Left ventricle myocardium superior (tissue), 1 donor: ENCODE measurements at regions of chr6 and their contacts with region 1.

Region 1: GRCh38 chr6:28863604-28864320 is 60.0 kb downstream of the TRIM27 start:
- DNase-seq: peak; percentile 66
- ATAC-seq: peak; percentile 84

Region 2: DNA sequence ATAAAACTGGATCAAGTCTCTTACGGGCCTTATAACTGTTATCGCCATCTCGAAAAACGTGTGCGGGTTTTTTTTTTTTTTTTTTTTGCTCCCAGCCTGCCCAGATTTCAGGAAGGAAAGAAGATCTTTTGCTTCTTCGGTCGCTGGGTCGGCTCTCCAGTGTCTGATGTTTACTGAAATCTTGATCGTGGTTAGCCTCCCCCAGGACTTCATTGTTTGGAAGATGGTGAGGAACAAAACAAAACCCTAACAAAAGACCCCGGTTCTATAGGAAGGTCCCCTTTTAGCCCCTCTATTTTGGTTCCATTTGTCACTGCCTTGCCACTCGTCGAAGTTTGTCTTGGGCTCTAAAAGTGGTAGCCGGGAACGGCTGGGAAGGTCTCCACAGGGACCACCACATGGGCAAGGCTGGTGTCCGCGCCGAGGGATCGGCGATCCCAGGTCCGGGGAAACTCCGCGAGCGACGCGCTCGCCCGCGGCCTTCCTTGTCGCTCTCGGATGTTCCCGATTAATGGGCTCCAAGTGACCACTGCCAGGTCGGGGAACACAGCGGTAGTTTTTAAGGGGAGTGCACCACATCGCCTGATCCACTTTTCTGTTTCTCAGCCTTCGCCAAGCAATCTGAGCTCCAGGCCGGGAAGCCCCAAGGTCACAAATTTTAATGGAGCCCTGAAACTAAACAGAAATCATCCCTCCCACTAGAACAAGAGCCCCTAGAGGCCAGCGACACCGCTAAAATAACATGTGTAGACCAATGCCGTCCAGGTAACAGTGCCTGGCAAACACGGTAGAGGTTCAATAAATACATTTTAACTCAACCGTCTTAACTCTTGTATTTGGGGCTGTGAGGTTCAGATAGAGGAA is 33.0 kb after region 1 on chr6:
- intact Hi-C with region 1: loop called (anchors 2 kb)
- DNase-seq: peak; percentile 71
- ATAC-seq: peak; percentile 52